Activated CD4-positive, alpha-beta memory T cell treated with anti-CD3 and anti-CD28 coated beads for 36 hours (primary cell): ENCODE measurements at regions of chr17 and their contacts with region 1.

Region 1: DNA sequence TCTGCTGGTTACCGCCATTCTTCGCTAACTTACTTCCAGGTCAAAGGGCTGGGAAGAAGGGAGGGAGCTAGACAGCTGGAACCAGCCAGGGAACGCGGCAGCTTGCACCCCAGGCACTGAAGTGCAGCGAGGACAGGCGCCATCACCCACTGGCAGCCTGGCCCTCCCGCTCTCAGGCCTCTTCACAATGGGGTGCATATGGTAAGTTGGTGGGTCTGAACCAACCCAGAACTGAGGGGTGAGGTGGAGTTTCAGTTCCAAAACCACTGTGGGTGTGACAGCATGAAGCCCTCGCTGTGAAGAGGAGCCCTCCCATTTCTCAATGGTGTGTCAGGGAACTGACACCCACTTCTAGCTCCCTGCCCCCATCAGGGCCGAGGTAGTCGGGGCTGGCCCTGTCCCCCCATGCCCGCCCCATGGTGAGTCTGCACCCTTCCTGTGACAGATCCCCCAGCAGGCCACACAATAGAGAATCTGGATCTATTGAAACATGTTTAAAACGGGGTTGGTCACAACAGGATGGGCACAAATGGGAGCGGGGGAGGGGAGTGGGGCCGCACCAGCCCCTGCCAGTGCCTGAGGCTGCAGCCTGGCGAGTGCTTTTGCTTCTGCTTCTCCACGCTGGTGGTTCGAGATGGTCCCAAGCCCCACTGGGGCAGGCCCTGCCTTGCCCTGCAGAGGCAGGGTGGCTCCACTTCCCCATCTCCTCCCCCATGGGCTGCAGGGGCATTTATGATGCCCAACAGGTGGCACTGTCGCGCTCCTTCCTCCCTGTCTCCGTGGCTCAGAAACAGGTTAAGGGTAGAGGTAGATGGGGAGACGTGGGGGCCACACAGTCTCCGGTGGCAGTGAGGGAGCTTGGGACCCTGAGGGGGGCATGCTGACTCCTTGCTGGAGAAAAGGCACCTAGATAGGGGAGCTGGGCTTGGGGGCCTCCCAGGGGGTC is 2.3 kb downstream of the LIMD2 start:
- DNase-seq: peak; percentile 90
- H3K4me3 Mint-ChIP-seq: peak overlapping the region; percentile 88
- H3K27ac Mint-ChIP-seq: peak overlapping the region; percentile 96
- H3K4me1 Mint-ChIP-seq: peaks cover 53% of the 10 kb centered on the region
- H3K27me3 Mint-ChIP-seq: no peaks in the 10 kb centered on the region

Region 2: GRCh38 chr17:63425482-63425881 is 272.1 kb before region 1 on chr17:
- CTCF ChIA-PET with region 1: interaction called, 17 read pairs
- POLR2A ChIA-PET with region 1: interaction called, 4 read pairs
- intact Hi-C with region 1: loop called (anchors 5 kb)
- DNase-seq: peak; percentile 79
- H3K4me3 Mint-ChIP-seq: no peak overlapping the region
- H3K27ac Mint-ChIP-seq: no peak overlapping the region
- H3K4me1 Mint-ChIP-seq: peaks cover 33% of the 10 kb centered on the region
- H3K27me3 Mint-ChIP-seq: no peaks in the 10 kb centered on the region

Region 3: GRCh38 chr17:63455417-63455816 is 242.2 kb before region 1 on chr17:
- CTCF ChIA-PET with region 1: no interaction called
- POLR2A ChIA-PET with region 1: no interaction called
- intact Hi-C with region 1: no loop called
- DNase-seq: no peak
- H3K4me3 Mint-ChIP-seq: no peak overlapping the region
- H3K27ac Mint-ChIP-seq: no peak overlapping the region
- H3K4me1 Mint-ChIP-seq: peaks cover 4% of the 10 kb centered on the region
- H3K27me3 Mint-ChIP-seq: no peaks in the 10 kb centered on the region

Region 4: DNA sequence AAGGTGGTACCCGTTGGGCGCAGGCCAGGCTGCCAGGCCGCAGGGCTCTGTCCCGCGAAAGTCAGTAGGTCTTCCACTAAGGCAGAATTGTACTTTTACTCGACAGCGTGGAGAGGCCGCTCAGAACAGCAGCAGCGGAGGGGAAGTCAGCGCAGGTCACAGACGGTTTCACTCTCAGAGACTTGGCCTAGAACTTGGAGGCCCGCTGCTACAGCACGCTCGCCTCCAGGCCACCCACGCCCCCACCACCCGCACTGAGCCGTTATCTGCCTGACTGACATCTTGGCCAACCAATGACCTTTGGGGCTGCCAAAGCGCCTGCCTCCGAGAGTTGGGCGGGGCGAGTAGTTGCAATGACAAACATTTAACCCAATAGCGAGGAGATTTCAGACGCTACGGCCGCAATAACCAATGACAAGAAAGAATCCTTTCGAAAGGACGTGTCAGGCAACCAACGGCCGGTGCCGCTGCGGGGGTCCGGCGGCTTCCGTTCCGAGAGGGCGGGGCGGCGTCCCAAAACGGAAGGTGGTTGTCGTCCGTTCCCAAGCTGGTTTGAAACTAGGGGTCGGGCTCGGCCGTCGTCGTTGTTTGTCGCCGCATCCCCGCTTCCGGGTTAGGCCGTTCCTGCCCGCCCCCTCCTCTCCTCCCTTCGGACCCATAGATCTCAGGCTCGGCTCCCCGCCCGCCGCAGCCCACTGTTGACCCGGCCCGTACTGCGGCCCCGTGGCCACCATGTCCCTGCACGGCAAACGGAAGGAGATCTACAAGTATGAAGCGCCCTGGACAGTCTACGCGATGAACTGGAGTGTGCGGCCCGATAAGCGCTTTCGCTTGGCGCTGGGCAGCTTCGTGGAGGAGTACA is 147.4 kb before region 1 on chr17 and contains the start of gene DCAF7:
- CTCF ChIA-PET with region 1: no interaction called
- POLR2A ChIA-PET with region 1: interaction called, 11 read pairs
- intact Hi-C with region 1: loop called (anchors 2 kb)
- DNase-seq: peak; percentile 100
- H3K4me3 Mint-ChIP-seq: peak within 1 kb of the TSS; percentile 85
- H3K27ac Mint-ChIP-seq: peak within 1 kb of the TSS; percentile 96
- H3K4me1 Mint-ChIP-seq: peaks cover 32% of the 10 kb centered on the region
- H3K27me3 Mint-ChIP-seq: no peaks in the 10 kb centered on the region
- total RNA-seq, gene DCAF7: 118 to 119 TPM

Region 5: DNA sequence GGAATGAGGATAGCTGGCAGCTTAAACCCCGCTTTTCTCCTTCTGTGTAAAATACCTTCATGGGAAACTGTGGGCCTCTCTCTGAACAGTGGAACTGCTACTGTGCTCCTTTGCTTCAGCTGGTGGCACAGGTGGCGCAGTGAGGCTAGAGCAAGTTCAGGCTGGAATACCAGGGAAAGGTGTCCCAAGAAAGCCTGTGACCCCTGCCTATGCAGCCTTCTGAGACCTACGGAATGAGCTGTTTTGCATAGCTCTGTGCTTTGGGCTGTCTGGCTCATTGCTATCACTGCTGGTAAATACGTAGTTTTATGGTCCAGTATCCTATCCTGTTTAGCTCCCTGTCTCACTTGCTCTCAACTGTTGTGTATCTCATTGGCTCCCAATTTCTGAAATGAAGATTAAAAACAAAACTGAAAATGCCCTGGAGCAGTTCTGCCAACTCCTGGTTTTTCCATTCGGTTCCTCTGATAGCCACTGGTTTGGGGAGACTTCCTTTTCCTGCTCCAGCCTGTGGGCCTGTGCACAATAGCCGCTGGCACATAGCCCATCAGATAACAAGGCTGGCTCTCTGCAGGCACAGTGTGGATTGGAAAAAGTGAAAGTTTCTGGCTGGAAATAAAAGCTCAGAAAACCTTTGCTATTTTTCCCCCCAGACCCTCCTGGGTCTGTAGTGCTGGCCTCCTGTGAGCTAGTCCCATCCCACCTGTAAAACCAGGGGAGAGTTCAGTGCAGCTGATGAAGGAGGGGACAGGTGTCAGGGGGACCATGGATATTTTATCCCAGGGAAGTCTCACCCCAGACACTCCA is 21.8 kb before region 1 on chr17:
- CTCF ChIA-PET with region 1: interaction called, 14 read pairs
- POLR2A ChIA-PET with region 1: interaction called, 3 read pairs
- intact Hi-C with region 1: no loop called
- DNase-seq: no peak
- H3K4me3 Mint-ChIP-seq: no peak overlapping the region
- H3K27ac Mint-ChIP-seq: no peak overlapping the region
- H3K4me1 Mint-ChIP-seq: peaks cover 5% of the 10 kb centered on the region
- H3K27me3 Mint-ChIP-seq: no peaks in the 10 kb centered on the region

Region 6: GRCh38 chr17:63714547-63715277 is 17.1 kb after region 1 on chr17:
- CTCF ChIA-PET with region 1: interaction called, 27 read pairs
- POLR2A ChIA-PET with region 1: interaction called, 3 read pairs
- intact Hi-C with region 1: loop called (anchors 1 kb)
- DNase-seq: no peak
- H3K4me3 Mint-ChIP-seq: no peak overlapping the region
- H3K27ac Mint-ChIP-seq: no peak overlapping the region
- H3K4me1 Mint-ChIP-seq: peaks cover 8% of the 10 kb centered on the region
- H3K27me3 Mint-ChIP-seq: no peaks in the 10 kb centered on the region

Region 7: DNA sequence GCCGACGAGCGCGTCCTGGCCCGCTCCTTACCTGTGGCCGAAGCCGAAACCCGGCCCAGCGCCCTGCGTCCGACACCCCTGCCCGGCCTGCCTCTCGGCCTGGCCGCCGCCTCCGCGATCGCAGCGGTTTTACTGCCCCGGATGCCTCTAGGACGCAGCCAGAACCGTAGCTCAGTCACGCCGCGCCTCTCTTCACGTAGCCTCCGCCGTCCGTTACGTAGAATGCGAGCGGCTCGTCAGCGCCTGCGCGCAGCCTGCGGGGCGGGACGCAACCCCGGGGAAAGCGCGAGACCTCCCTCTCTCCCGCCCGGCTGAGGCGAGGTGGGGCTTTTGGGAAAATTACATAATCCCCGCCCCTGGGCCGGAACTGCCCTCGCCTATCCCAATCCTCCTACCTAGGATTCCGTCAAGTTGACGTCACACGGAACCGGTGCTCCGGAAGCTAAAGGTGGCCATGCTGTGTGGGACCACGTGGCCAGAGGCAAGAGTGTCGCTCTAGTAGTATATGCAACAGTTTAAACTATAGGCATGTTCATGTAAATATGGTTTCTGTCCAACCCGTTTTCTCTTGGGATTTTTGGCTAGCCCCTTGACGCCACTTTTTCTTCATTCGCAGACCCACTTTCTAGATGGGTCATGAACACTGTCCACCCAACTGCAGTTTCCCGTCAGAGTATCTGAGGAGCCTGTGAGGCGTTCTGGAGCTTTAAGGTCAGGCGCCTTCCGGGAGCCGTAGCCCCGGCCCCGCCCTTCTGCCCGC is 75.9 kb after region 1 on chr17 and contains the start of gene CCDC47:
- CTCF ChIA-PET with region 1: interaction called, 5 read pairs
- POLR2A ChIA-PET with region 1: interaction called, 22 read pairs
- intact Hi-C with region 1: loop called (anchors 1 kb)
- DNase-seq: peak; percentile 99
- H3K4me3 Mint-ChIP-seq: peak within 1 kb of the TSS; percentile 95
- H3K27ac Mint-ChIP-seq: peak within 1 kb of the TSS; percentile 100
- H3K4me1 Mint-ChIP-seq: peaks cover 47% of the 10 kb centered on the region
- H3K27me3 Mint-ChIP-seq: no peaks in the 10 kb centered on the region
- total RNA-seq, gene CCDC47: 57.6 to 60.5 TPM

Region 8: DNA sequence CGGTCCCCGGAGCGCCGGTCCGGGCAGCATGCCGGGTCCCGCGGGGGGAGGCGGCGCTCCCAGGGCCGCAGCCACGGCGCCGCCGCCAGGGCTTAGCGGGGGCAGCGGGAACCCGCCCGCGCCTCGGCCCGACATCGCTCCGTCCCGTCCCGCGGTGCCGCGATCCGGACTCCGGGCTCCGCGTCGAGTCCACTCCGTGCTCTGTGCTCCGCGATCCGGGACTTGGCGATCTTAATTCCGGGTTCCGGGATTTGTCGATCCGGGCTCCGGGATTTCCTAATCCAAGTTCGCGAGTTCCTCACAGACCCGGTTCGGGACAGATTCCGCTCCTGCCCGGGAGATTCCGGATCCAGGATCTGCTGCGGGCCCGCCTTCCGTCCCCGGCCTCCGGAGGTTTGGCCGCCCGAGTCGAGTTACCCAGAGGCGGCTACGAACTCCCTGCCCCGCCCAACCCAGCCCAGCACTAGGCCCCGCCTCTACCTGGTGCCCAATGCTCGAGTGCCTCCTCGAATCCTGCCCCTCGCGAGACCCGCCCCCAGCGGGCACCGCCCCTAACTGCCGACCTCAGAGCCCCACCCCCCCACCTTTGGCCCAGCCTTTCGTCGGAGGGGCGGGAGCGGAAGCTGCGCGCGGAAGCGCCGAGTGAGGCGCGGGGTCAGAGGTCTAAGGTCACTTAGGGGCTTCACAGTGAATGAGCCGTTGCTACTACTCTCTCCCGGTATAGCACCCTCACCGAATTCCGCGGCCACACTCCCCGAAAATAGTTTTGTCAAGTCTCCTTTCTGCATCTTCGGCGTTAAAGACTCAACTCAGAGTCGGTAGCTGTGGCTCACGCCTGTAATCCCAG is 145.1 kb after region 1 on chr17 and contains the start of gene SMARCD2:
- CTCF ChIA-PET with region 1: interaction called, 3 read pairs
- POLR2A ChIA-PET with region 1: interaction called, 3 read pairs
- intact Hi-C with region 1: loop called (anchors 5 kb)
- DNase-seq: peak; percentile 100
- H3K4me3 Mint-ChIP-seq: peak within 1 kb of the TSS; percentile 95
- H3K27ac Mint-ChIP-seq: peak within 1 kb of the TSS; percentile 95
- H3K4me1 Mint-ChIP-seq: peaks cover 34% of the 10 kb centered on the region
- H3K27me3 Mint-ChIP-seq: no peaks in the 10 kb centered on the region
- total RNA-seq, gene SMARCD2: 109 to 111 TPM